Heart left ventricle (tissue), 16 donors: ENCODE measurements at regions of chr1 and their contacts with region 1.

Region 1: GRCh38 chr1:167687919-167688519 is 33.8 kb upstream of the MPZL1 start:
- DNase-seq: peak in 4 of 5 donors; percentile 58 to 74 (median 71)
- ATAC-seq: peak in 3 of 4 donors; percentile 28 to 45 (median 44)
- H3K4me3 ChIP-seq: no peak overlapping the region
- H3K27ac ChIP-seq: peak overlapping the region in 8 of 12 donors; percentile 41 to 89 (median 80)
- H3K4me1 ChIP-seq: peaks cover 9 to 64% (median 47%) of the 10 kb centered on the region in 12 donors
- H3K27me3 ChIP-seq: no peaks in the 10 kb centered on the region
- CTCF ChIP-seq: peak; percentile 86 to 98 (median 93)
- POLR2A ChIP-seq: no peak

Region 2: DNA sequence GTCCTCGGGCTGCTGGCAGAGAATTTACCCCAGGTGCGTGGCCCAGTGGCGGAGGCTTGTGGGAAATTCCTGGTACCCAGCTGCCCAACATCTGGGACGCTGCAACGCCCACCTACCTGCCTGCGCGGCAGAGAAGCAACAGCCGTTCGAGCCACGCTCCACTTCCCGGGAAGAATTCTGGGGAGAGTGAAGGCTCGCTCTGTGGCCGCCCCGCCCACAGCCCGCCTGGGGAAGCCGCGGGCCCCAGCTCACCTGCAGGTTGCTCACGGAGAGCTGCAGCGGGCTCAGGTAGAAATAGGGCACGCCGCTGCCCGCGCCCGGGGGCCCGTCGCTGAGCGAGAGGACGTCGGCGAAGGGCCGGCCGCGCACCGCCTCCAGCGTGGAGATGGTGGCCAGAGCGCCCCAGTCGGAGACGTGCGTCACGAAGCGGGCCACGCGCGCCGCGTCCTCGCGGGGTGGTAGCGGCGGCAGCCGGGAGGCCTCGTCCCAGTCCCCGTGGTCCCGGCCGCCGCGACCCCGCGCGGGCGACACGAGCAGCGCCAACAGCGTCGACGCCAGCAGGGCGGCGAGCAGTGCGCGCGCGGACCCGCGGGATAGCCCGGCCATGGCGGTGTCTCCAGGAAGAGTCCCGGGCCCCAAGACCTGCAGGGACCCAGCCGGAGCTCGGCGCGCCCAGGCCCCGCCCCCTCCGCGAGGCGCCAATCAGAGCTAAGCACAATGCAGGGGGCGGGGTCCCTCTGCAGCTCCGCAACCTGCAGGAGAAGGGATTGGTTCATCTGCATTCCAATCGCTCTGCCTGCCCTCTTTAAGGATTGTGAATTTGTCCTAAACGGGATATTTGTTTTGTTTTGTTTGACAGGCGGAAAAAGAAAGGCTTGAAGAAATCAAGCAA is 134.6 kb before region 1 on chr1 and contains the start of gene CREG1:
- intact Hi-C with region 1: loop called in 4 of 10 experiments (anchors 5 kb)
- DNase-seq: peak; percentile 95 to 98 (median 96)
- ATAC-seq: peak; percentile 99 to 100 (median 100)
- H3K4me3 ChIP-seq: peak within 1 kb of the TSS; percentile 60 to 99 (median 84)
- H3K27ac ChIP-seq: peak within 1 kb of the TSS in 11 of 12 donors; percentile 69 to 90 (median 82)
- H3K4me1 ChIP-seq: peaks cover 0 to 53% (median 18%) of the 10 kb centered on the region in 12 donors
- H3K27me3 ChIP-seq: no peaks in the 10 kb centered on the region
- CTCF ChIP-seq: peak in 2 of 12 donors; percentile 11 to 15
- POLR2A ChIP-seq: peak; percentile 53 to 98
- total RNA-seq, gene CREG1: 64.1 to 176 (median 91.1) TPM

Region 3: GRCh38 chr1:167599957-167600581 is 88.0 kb before region 1 on chr1:
- intact Hi-C with region 1: loop called (anchors 1 to 2 kb)
- DNase-seq: peak in 4 of 5 donors; percentile 41 to 57 (median 52)
- ATAC-seq: peak; percentile 83 to 86 (median 86)
- H3K4me3 ChIP-seq: peak overlapping the region in 1 of 12 donors; percentile 23
- H3K27ac ChIP-seq: peak overlapping the region in 6 of 12 donors; percentile 12 to 80 (median 52)
- H3K4me1 ChIP-seq: peaks cover 15 to 41% (median 31%) of the 10 kb centered on the region in 12 donors
- H3K27me3 ChIP-seq: no peaks in the 10 kb centered on the region
- CTCF ChIP-seq: peak; percentile 44 to 85 (median 72)
- POLR2A ChIP-seq: no peak

Region 4: GRCh38 chr1:167617153-167618147 is 70.6 kb before region 1 on chr1:
- intact Hi-C with region 1: loop called in 1 of 10 experiments (anchors 5 kb)
- DNase-seq: peak; percentile 56 to 68 (median 61)
- ATAC-seq: peak; percentile 84 to 90 (median 88)
- H3K4me3 ChIP-seq: peak overlapping the region in 7 of 12 donors; percentile 1 to 40 (median 11)
- H3K27ac ChIP-seq: peak overlapping the region; percentile 59 to 88 (median 72)
- H3K4me1 ChIP-seq: peaks cover 0 to 48% (median 21%) of the 10 kb centered on the region in 12 donors
- H3K27me3 ChIP-seq: no peaks in the 10 kb centered on the region
- CTCF ChIP-seq: no peak
- POLR2A ChIP-seq: no peak

Region 5: GRCh38 chr1:167627865-167628641 is 60.0 kb before region 1 on chr1:
- intact Hi-C with region 1: loop called in 7 of 10 experiments (anchors 2 to 10 kb)
- DNase-seq: peak in 4 of 5 donors; percentile 40 to 63 (median 44)
- ATAC-seq: peak in 3 of 4 donors; percentile 6 to 41 (median 35)
- H3K4me3 ChIP-seq: peak overlapping the region in 1 of 12 donors; percentile 96
- H3K27ac ChIP-seq: peak overlapping the region; percentile 84 to 99 (median 96)
- H3K4me1 ChIP-seq: peaks cover 6 to 53% (median 46%) of the 10 kb centered on the region in 12 donors
- H3K27me3 ChIP-seq: no peaks in the 10 kb centered on the region
- CTCF ChIP-seq: no peak
- POLR2A ChIP-seq: no peak

Region 6: GRCh38 chr1:167650269-167651160 is 37.5 kb before region 1 on chr1:
- intact Hi-C with region 1: loop called in 2 of 10 experiments (anchors 5 kb)
- DNase-seq: peak in 3 of 5 donors; percentile 51 to 65 (median 59)
- ATAC-seq: peak; percentile 19 to 59 (median 46)
- H3K4me3 ChIP-seq: no peak overlapping the region
- H3K27ac ChIP-seq: peak overlapping the region; percentile 19 to 88 (median 76)
- H3K4me1 ChIP-seq: peaks cover 22 to 97% (median 88%) of the 10 kb centered on the region in 12 donors
- H3K27me3 ChIP-seq: no peaks in the 10 kb centered on the region
- CTCF ChIP-seq: no peak
- POLR2A ChIP-seq: no peak

Region 7: DNA sequence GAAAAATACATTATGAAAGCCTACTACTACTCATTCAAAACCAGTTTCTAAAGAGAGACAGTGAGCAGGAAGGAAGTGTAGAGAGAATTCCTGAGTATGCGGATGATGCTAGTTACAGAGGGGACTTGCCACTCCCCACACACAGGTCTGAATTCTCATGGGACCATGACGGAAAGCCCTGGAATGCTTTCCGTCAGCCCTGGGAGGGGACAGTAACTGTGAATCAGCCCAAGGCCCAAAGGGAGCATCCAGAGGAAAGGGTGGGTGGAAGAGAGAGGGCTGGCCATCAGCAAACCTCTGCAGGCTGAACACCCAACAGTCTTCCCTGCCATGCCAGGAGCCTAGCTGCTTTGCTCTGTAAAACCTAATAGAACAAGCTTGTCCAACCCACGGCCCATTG is 21.6 kb before region 1 on chr1:
- intact Hi-C with region 1: loop called in 3 of 10 experiments (anchors 1 to 2 kb)
- DNase-seq: peak in 4 of 5 donors; percentile 52 to 78 (median 70)
- ATAC-seq: peak in 3 of 4 donors; percentile 13 to 75 (median 57)
- H3K4me3 ChIP-seq: no peak overlapping the region
- H3K27ac ChIP-seq: peak overlapping the region in 11 of 12 donors; percentile 9 to 80 (median 61)
- H3K4me1 ChIP-seq: peaks cover 38 to 96% (median 84%) of the 10 kb centered on the region in 12 donors
- H3K27me3 ChIP-seq: no peaks in the 10 kb centered on the region
- CTCF ChIP-seq: no peak
- POLR2A ChIP-seq: peak in 1 of 2 donors; percentile 19